ENCODE measurements at regions of chr9 and their contacts with region 1.

Region 1: GRCh38 chr9:114291064-114291474 is 31.8 kb upstream of the ORM1 start:
- H3K4me3 ChIP-seq: no peak overlapping the region
- H3K27ac ChIP-seq: no peak overlapping the region
- H3K4me1 ChIP-seq: no peaks in the 10 kb centered on the region
- CTCF ChIP-seq: peak; percentile 49; the same call in 1 of the 2 replicates

Region 2: DNA sequence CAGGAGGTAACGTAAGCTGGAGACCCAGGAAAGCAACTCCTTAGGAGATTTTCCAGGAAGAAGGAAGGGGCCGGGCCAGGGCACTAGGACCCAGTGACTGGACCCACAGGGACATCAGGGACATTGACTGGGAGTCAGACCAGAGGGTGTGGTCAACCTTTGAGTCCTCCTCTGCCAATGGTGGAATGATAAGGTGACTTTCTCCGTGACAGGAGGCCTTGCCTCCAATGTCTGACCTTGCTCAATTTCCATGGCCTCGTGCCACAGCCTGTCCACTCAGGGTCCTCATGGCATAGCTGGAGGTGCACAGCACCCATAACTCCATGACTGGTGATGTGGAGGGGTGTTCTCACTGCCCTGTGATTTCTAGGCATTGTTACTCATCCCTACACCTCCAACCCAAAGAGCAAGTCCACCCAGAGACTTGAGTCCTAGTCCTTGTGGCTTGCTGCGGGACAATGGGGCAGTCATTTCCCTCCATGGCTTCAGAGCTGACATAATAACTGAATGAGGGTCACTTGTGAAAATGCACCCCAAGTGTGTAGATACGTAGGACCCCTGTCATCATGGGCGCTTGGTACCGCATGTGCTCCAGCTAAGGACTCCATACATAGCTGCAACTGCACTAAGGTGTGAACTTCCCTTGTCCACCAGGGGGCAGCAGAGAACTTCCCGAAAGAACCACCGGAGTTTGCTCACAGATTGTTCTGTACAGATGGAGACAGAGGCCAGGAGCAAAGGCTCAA is 208.9 kb before region 1 on chr9:
- CTCF ChIA-PET with region 1: interaction called, 144 read pairs
- POLR2A ChIA-PET with region 1: no interaction called
- H3K4me3 ChIP-seq: no peak overlapping the region
- H3K27ac ChIP-seq: no peak overlapping the region
- H3K4me1 ChIP-seq: no peaks in the 10 kb centered on the region
- CTCF ChIP-seq: peak; percentile 60

Region 3: DNA sequence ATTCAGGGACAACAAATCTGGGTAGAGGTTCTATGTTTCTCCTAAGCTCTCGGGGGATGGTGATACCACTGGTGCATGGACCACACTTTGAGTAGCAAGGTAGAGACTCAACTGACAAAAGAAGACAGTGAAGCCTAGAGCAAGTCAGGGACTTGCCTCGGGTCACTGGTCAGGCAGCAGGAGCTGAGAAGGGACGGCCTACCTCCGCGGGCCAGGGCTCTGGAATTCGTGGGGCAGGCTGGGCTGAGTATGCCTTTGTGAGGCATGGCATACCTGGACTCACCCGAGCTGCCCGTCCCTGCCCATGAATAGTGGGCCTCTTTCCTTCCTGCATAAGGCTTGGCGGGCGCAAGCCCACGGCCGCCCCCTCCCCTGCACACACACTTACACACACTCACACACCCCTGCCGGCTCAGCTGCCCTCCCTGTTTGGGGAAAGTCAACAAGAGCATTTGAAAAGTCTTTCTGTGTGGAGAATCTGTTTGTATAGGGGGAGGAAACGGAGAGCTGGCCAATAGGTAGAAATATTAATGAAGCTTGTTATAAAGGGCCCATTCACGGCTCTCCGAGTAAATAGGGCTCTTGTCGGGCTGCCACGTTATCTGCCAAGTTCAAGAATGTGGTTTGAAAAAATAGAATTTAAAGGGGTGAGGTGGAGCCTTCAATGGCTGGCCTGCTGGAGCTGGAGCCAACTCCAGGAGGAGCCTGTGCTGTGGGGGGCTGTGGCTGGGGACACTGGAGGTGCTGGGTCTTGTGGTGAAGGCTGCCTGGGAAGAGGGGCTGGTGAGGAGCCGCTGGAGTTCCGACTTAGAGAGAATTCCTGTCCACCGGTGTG is 172.9 kb before region 1 on chr9:
- CTCF ChIA-PET with region 1: interaction called, 20 read pairs
- POLR2A ChIA-PET with region 1: no interaction called
- H3K4me3 ChIP-seq: no peak overlapping the region
- H3K27ac ChIP-seq: no peak overlapping the region
- H3K4me1 ChIP-seq: no peaks in the 10 kb centered on the region
- CTCF ChIP-seq: no peak

Region 4: DNA sequence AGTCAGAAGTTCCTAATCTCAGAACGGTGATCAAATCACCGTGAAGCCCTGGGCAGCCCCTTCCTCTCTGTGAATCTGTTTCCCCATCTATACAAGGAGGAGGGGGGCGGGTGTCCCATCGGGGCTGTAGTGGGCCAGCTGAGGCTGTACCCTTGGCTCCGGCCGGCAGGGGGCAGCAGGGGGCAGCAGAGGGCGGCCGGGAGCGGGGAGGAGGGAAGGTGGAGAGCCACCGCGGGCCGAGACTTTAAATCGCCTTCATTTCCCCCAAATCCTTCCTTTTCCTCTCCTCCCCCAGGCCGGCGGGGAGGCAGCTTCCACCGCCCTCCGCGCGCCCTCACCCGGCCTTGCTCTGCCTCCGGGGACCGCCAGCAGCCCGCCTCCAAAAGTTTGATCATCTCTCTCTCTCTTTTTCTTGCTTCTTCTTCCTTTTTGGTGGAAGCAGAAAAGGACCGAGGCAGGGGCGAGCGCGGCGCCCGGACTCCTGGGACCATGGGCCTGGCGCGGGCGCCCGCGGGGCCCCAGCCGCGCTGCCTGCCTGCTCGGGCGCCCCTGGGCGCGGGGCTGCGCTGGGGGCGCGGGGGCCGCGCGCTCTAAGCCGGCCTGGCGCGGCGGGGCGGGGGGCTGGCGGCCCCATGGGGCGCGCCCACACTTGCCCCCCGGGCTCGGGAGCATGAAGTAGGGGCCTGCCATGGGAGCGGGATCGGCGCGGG is 135.7 kb before region 1 on chr9 and contains the start of gene COL27A1:
- CTCF ChIA-PET with region 1: interaction called, 15 read pairs
- POLR2A ChIA-PET with region 1: interaction called, 3 read pairs
- H3K4me3 ChIP-seq: peak within 1 kb of the TSS; percentile 66
- H3K27ac ChIP-seq: peak within 1 kb of the TSS; percentile 56; the same call in 1 of the 2 replicates
- H3K4me1 ChIP-seq: no peaks in the 10 kb centered on the region; the same call in 1 of the 2 replicates
- CTCF ChIP-seq: peak; percentile 80

Region 5: GRCh38 chr9:114263853-114264510 is 27.1 kb before region 1 on chr9:
- CTCF ChIA-PET with region 1: interaction called, 14 read pairs
- POLR2A ChIA-PET with region 1: no interaction called
- H3K4me3 ChIP-seq: no peak overlapping the region
- H3K27ac ChIP-seq: no peak overlapping the region
- H3K4me1 ChIP-seq: no peaks in the 10 kb centered on the region
- CTCF ChIP-seq: no peak